T-cell (primary cell): ENCODE measurements at regions of chr19 and their contacts with region 1.

Region 1: DNA sequence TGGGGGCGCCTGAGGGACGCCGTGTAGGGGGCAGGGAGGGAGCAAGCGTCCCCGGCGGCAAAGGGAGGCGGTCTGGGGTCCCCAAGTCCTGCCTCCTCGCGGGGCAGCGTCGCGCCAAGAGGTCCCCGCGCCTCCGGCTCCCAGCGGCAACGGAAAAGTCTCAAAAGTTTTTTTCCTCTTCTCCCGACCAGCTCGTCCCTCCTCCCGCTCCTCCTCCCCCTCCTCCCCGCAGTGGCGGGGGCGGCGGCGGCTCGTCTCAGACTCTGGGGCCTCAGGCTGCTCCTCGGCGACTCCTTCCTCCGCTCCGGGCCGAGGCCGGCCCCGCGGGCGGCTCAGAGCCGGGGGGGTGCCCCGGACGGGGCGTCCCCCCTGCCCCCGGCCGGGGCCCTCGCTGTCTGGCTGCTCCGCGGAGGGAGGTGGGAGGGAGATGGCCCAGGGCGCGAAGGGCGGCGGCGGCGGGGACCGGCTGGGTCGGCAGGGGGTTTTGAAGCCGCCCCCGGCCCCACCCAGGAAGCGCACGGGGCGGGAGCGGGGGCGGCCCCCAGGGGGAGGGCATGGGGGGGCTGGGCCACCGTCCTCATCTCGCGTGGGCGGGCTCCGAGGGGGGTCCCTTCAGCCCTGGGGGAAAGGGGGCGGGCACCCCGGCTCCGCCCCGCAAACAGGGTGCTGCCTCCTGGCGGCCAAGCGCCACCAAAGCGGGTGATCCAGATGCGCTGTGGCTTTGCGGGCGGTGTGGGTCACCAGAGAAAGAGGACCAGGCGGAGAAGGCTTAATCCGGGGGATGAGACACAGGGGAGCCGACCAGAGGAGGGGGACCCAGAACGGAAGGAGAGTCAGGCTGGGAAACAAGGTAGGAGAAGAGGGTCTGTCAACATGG is at the start of gene TGFB1:
- DNase-seq: peak; percentile 86 to 97 (median 93)
- ATAC-seq: peak; percentile 59 to 73 (median 64)
- H3K4me3 ChIP-seq: peak within 1 kb of the TSS; percentile 68 to 94
- H3K4me3 Mint-ChIP-seq: peak within 1 kb of the TSS; percentile 97 to 99 (median 99)
- H3K27ac ChIP-seq: peak within 1 kb of the TSS; percentile 92
- H3K27ac Mint-ChIP-seq: peak within 1 kb of the TSS; percentile 97 to 98
- H3K4me1 ChIP-seq: peaks cover 67 to 72% of the 10 kb centered on the region in 2 experiments
- H3K4me1 Mint-ChIP-seq: peaks cover 63 to 75% (median 67%) of the 10 kb centered on the region in 3 donors
- H3K27me3 ChIP-seq: no peaks in the 10 kb centered on the region
- H3K27me3 Mint-ChIP-seq: no peaks in the 10 kb centered on the region
- total RNA-seq, gene TGFB1: 170 to 412 (median 206) TPM

Region 2: GRCh38 chr19:39704181-39705044 is 1649.3 kb before region 1 on chr19 and contains the start of gene LGALS14:
- CTCF ChIA-PET with region 1: no interaction called
- POLR2A ChIA-PET with region 1: no interaction called
- DNase-seq: no peak
- ATAC-seq: no peak
- H3K4me3 ChIP-seq: no peak within 1 kb of the TSS
- H3K4me3 Mint-ChIP-seq: peak within 1 kb of the TSS in 1 of 3 donors; percentile 41
- H3K27ac ChIP-seq: no peak within 1 kb of the TSS
- H3K27ac Mint-ChIP-seq: peak within 1 kb of the TSS; percentile 66 to 78
- H3K4me1 ChIP-seq: peaks cover 0 to 11% of the 10 kb centered on the region in 2 experiments
- H3K4me1 Mint-ChIP-seq: peaks cover 29 to 42% (median 30%) of the 10 kb centered on the region in 3 donors
- H3K27me3 ChIP-seq: no peaks in the 10 kb centered on the region
- H3K27me3 Mint-ChIP-seq: peaks cover 3 to 15% of the 10 kb centered on the region in 2 donors
- total RNA-seq, gene LGALS14: 0.49 to 1.2 TPM in 2 of 5 donors, not detected in the others

Region 3: GRCh38 chr19:41133260-41133659 is 220.4 kb before region 1 on chr19:
- CTCF ChIA-PET with region 1: no interaction called
- POLR2A ChIA-PET with region 1: no interaction called
- DNase-seq: no peak
- ATAC-seq: no peak
- H3K4me3 ChIP-seq: no peak overlapping the region
- H3K4me3 Mint-ChIP-seq: peak overlapping the region in 2 of 3 donors; percentile 19 to 84
- H3K27ac ChIP-seq: no peak overlapping the region
- H3K27ac Mint-ChIP-seq: no peak overlapping the region
- H3K4me1 ChIP-seq: peaks cover 0 to 22% of the 10 kb centered on the region in 2 experiments
- H3K4me1 Mint-ChIP-seq: peaks cover 18 to 26% (median 25%) of the 10 kb centered on the region in 3 donors
- H3K27me3 ChIP-seq: peaks cover 2 to 4% of the 10 kb centered on the region in 2 experiments
- H3K27me3 Mint-ChIP-seq: no peaks in the 10 kb centered on the region

Region 4: GRCh38 chr19:41327576-41328156 is 26.0 kb before region 1 on chr19:
- CTCF ChIA-PET with region 1: interaction called in 1 of 2 experiments, 7 read pairs
- POLR2A ChIA-PET with region 1: interaction called, 3 to 28 read pairs
- DNase-seq: peak; percentile 57 to 94 (median 76)
- ATAC-seq: peak; percentile 66 to 74 (median 68)
- H3K4me3 ChIP-seq: peak overlapping the region; percentile 19 to 40
- H3K4me3 Mint-ChIP-seq: peak overlapping the region; percentile 72 to 75 (median 74)
- H3K27ac ChIP-seq: peak overlapping the region; percentile 81
- H3K27ac Mint-ChIP-seq: peak overlapping the region; percentile 92 to 96
- H3K4me1 ChIP-seq: peaks cover 18 to 94% of the 10 kb centered on the region in 2 experiments
- H3K4me1 Mint-ChIP-seq: peaks cover 63 to 76% (median 73%) of the 10 kb centered on the region in 3 donors
- H3K27me3 ChIP-seq: no peaks in the 10 kb centered on the region
- H3K27me3 Mint-ChIP-seq: no peaks in the 10 kb centered on the region

Region 5: GRCh38 chr19:41363753-41364523 is 10.2 kb after region 1 on chr19 and contains the start of gene B9D2:
- CTCF ChIA-PET with region 1: interaction called, 3 to 17 read pairs
- POLR2A ChIA-PET with region 1: interaction called, 6 to 49 read pairs
- DNase-seq: peak; percentile 96 to 99 (median 99)
- ATAC-seq: peak; percentile 94 to 97 (median 96)
- H3K4me3 ChIP-seq: peak within 1 kb of the TSS; percentile 85
- H3K4me3 Mint-ChIP-seq: peak within 1 kb of the TSS; percentile 83 to 94 (median 89)
- H3K27ac ChIP-seq: peak within 1 kb of the TSS; percentile 99
- H3K27ac Mint-ChIP-seq: peak within 1 kb of the TSS; percentile 98 to 100
- H3K4me1 ChIP-seq: peaks cover 13 to 31% of the 10 kb centered on the region in 2 experiments
- H3K4me1 Mint-ChIP-seq: peaks cover 28 to 40% (median 36%) of the 10 kb centered on the region in 3 donors
- H3K27me3 ChIP-seq: no peaks in the 10 kb centered on the region
- H3K27me3 Mint-ChIP-seq: no peaks in the 10 kb centered on the region
- total RNA-seq, gene B9D2: 15.3 to 27.9 (median 16.4) TPM

Region 6: DNA sequence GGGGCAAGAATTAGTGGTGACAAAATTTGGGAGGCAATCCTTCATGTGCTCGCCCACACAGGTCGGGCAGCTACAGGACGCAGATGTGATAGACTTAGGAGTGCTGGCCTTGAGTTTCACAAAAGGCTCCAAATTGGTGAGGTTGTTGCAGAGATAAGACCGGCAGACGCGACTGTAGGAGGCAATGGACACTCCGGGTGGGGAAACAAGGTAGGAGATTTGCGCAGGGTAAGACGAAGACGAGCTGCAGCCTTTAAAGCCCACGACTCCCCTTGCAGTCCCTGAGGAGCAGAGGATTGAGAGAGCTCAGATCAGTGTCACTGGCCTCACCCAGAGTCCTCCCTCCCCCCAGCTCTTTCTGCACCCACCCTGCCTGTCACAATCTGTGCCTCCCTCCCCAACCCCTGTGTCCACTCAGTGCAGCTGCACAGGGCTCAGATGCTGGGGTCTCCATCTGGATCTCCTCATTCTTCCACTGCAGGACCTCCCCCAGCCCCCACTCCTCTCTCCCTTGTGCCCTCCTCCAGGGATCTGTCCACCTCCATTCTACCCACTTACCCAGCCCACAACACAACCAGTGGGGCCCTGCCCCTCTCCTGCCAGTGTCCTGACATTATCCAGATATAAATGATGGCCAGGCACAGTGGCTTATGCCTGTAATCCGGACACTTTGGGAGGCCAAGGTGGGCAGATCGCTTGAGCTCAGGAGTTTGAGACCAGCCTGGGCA is 484.4 kb after region 1 on chr19:
- CTCF ChIA-PET with region 1: interaction called in 1 of 2 experiments, 20 read pairs
- POLR2A ChIA-PET with region 1: no interaction called
- DNase-seq: no peak
- ATAC-seq: no peak
- H3K4me3 ChIP-seq: no peak overlapping the region
- H3K4me3 Mint-ChIP-seq: no peak overlapping the region
- H3K27ac ChIP-seq: no peak overlapping the region
- H3K27ac Mint-ChIP-seq: no peak overlapping the region
- H3K4me1 ChIP-seq: no peaks in the 10 kb centered on the region
- H3K4me1 Mint-ChIP-seq: no peaks in the 10 kb centered on the region
- H3K27me3 ChIP-seq: peaks cover 0 to 43% of the 10 kb centered on the region in 2 experiments
- H3K27me3 Mint-ChIP-seq: peaks cover 23% of the 10 kb centered on the region in 2 donors